Adrenal gland (tissue), 19 donors: ENCODE measurements at regions of chr12 and their contacts with region 1.

Region 1: DNA sequence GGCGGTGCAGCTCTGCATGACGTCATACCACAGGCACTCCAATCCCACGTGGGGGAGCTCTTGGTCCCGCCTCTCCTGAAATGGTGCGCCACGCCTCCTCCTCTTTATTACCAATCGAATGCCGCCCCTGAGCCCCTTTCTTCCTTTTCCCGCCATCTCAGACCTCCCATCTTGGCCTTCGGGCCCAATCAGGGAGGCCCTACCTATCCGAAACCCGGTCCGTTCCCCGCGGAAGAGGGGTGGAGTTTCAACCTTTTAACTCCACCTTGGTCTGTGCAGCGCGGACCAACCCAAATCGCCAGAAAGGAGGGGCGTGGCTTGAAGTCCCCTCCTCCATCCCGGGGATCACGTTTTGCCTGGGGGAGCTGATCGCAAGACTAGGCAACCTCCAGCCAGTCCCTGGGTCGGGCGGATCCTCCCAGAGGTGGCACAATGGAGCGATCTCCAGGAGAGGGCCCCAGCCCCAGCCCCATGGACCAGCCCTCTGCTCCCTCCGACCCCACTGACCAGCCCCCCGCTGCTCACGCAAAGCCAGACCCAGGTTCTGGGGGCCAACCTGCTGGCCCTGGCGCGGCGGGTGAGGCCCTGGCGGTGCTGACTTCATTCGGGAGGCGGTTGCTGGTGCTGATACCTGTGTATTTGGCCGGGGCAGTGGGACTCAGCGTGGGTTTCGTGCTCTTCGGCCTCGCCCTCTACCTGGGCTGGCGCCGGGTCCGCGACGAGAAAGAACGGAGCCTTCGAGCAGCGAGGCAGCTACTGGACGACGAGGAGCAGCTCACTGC is at the start of gene ESYT1:
- DNase-seq: peak; percentile 98 to 100 (median 100)
- H3K4me3 ChIP-seq: peak within 1 kb of the TSS; percentile 19 to 71 (median 42)
- H3K27ac ChIP-seq: peak within 1 kb of the TSS; percentile 76 to 92 (median 83)
- H3K4me1 ChIP-seq: peaks cover 13 to 47% of the 10 kb centered on the region in 2 donors
- H3K27me3 ChIP-seq: no peaks in the 10 kb centered on the region
- CTCF ChIP-seq: peak in 2 of 6 experiments; percentile 8 to 12
- POLR2A ChIP-seq: peak; percentile 87 to 97
- total RNA-seq, gene ESYT1: 26.3 to 156 (median 125) TPM

Region 2: DNA sequence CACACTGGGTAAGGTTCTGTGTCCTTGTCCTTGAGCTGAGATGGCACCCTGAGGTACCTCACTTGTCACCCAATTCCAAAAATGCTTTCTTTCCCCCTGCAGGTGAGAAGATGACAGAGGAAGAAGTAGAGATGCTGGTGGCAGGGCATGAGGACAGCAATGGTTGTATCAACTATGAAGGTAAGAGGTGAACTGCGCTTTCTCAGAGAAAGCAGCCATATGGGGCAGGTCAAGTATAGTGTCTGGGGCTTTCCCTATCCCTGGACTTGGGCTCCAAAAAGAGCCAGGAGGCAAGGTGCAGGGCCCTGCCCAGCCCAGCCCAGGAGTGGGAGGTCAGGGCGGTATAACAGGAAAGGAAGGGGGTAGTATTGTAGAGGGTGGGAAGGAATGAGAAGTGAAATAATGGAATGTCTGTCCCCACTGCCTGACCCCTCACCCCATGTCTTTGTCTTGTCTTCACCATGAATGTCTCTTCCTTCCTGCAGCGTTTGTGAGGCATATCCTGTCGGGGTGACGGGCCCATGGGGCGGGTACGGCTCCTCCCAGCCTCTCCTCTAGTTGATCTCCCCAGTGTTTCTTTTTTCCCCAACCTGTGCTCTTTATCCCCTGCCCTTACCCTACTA is 32.2 kb after region 1 on chr12:
- intact Hi-C with region 1: loop called in 1 of 2 experiments (anchors 5 kb)
- DNase-seq: peak in 4 of 7 donors; percentile 47 to 74 (median 52)
- H3K4me3 ChIP-seq: peak overlapping the region in 2 of 4 donors; percentile 55 to 71
- H3K27ac ChIP-seq: peak overlapping the region in 4 of 5 donors; percentile 94 to 98 (median 96)
- H3K4me1 ChIP-seq: peaks cover 22 to 31% of the 10 kb centered on the region in 2 donors
- H3K27me3 ChIP-seq: no peaks in the 10 kb centered on the region
- CTCF ChIP-seq: no peak
- POLR2A ChIP-seq: no peak